ENCODE measurements at regions of chr17 and their contacts with region 1.

Region 1: DNA sequence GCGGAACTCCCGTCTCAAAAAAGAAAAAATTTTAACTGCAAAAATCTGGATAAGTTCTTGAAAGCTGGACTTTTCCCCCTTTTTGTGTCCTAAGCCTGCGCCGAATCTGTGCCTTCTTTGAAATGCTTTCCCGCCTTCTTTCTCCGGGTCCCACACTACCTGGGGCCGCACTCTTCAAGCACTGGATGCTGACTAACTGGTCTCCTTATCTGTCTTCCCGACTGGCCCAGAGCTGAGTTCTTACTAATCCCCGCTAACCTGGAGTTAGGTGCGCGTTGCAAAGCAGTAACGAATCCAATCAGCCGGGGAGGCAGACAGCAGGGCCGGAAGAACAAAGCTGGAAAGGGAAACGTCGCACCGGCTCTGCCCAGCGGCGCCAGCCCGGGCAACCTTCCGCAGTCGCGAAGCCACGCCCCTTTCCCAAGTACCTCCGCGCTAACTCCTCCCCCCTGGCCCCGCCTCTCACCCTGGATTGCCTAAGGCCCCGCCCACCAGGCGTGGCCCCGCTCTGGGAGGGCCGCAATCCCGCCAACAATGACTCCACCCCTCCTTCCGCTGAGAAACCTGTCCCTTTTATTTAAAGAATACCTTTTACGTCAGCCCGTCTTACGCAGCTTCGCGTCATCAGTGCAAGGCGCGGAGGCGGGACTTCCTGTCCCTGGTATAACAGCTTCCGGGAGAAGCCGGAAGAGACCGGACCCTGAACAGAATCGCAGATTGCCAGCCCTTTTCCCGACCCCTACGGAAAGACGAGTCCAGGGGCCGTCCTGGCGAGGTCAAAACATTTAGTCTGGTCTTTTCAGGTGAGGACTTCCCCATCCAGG is at the start of gene TMUB2:
- DNase-seq: peak; percentile 99 to 100 (median 100)
- ATAC-seq: peak; percentile 97
- H3K4me3 ChIP-seq: peak within 1 kb of the TSS; percentile 89 to 94
- H3K4me3 Mint-ChIP-seq: peak within 1 kb of the TSS; percentile 100
- H3K27ac ChIP-seq: peak within 1 kb of the TSS; percentile 99
- H3K27ac Mint-ChIP-seq: peak within 1 kb of the TSS; percentile 100
- H3K4me1 ChIP-seq: peaks cover 30% of the 10 kb centered on the region
- H3K4me1 Mint-ChIP-seq: peaks cover 48% of the 10 kb centered on the region
- H3K27me3 ChIP-seq: no peaks in the 10 kb centered on the region
- H3K27me3 Mint-ChIP-seq: no peaks in the 10 kb centered on the region
- CTCF ChIP-seq: no peak
- total RNA-seq, gene TMUB2: 43.2 to 43.8 TPM

Region 2: GRCh38 chr17:43900183-43900857 is 286.2 kb before region 1 on chr17:
- CTCF ChIA-PET with region 1: no interaction called
- POLR2A ChIA-PET with region 1: no interaction called
- intact Hi-C with region 1: loop called in 1 of 2 experiments (anchors 10 kb)
- DNase-seq: peak; percentile 55 to 84 (median 79)
- ATAC-seq: peak; percentile 99
- H3K4me3 ChIP-seq: peak overlapping the region; percentile 34 to 57
- H3K4me3 Mint-ChIP-seq: peak overlapping the region; percentile 81
- H3K27ac ChIP-seq: no peak overlapping the region
- H3K27ac Mint-ChIP-seq: no peak overlapping the region
- H3K4me1 ChIP-seq: peaks cover 6% of the 10 kb centered on the region
- H3K4me1 Mint-ChIP-seq: peaks cover 9% of the 10 kb centered on the region
- H3K27me3 ChIP-seq: no peaks in the 10 kb centered on the region
- H3K27me3 Mint-ChIP-seq: peaks cover 27% of the 10 kb centered on the region
- CTCF ChIP-seq: no peak

Region 3: GRCh38 chr17:44070455-44071197 is 115.9 kb before region 1 on chr17 and contains the start of gene G6PC3:
- CTCF ChIA-PET with region 1: interaction called, 3 read pairs
- POLR2A ChIA-PET with region 1: no interaction called
- intact Hi-C with region 1: loop called (anchors 2 to 5 kb)
- DNase-seq: peak; percentile 30 to 88 (median 75)
- ATAC-seq: peak; percentile 55
- H3K4me3 ChIP-seq: peak within 1 kb of the TSS; percentile 70 to 84
- H3K4me3 Mint-ChIP-seq: peak within 1 kb of the TSS; percentile 96
- H3K27ac ChIP-seq: peak within 1 kb of the TSS; percentile 62 to 80
- H3K27ac Mint-ChIP-seq: peak within 1 kb of the TSS; percentile 94
- H3K4me1 ChIP-seq: peaks cover 23% of the 10 kb centered on the region
- H3K4me1 Mint-ChIP-seq: peaks cover 34% of the 10 kb centered on the region
- H3K27me3 ChIP-seq: no peaks in the 10 kb centered on the region
- H3K27me3 Mint-ChIP-seq: no peaks in the 10 kb centered on the region
- CTCF ChIP-seq: no peak
- total RNA-seq, gene G6PC3: 4.8 to 5.9 TPM

Region 4: DNA sequence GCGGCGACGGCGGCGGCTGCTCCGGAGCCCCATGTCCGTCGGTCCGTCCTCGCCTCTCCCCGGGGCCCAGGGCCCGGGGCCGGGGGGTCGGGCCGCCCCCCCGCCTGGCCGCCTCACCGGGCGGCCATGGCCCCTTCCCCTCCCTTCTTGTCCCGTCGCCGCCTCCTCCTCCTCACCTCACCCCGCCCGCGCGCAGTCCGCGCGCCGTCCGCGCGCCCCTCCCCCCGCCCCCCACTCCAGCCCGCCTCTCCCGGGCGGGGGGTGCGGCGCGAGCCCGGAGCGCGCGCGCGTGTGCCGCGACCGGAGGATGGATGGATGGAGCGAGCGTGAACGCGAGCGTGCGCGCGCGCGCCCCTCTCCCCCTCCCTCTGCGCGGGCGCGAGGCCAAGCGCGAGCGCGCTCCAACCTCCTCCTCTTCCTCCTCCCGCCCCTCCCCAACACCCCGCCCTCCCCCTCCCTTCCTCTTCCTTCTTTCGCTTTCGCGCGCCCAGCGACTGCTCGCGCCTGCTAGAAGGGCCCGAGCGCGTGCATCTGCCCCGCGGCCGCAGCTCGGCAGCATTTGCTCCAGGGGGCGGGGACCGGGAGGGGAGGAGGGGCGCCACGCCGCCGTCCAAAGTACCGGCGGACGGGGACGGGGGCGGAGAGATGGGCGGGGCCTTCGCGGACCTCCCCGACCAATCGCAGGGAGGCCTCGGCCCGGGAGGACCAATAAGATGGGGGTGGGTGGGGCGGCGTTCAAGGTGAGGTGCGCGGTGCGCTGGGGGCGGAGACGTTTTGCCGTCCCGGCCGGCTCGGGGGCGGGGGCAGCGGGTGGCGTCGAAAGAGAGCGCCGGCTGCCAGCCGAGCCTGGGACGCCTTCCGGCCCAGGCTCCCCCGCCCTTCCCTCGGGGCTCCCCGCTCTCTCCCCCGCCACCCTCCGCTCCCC is 13.3 kb after region 1 on chr17 and contains the start of gene ATXN7L3:
- CTCF ChIA-PET with region 1: interaction called, 26 read pairs
- POLR2A ChIA-PET with region 1: interaction called, 15 read pairs
- intact Hi-C with region 1: loop called (anchors 1 kb)
- DNase-seq: peak; percentile 99 to 100 (median 99)
- ATAC-seq: peak; percentile 84
- H3K4me3 ChIP-seq: peak within 1 kb of the TSS; percentile 84 to 96
- H3K4me3 Mint-ChIP-seq: peak within 1 kb of the TSS; percentile 86
- H3K27ac ChIP-seq: peak within 1 kb of the TSS; percentile 69 to 92
- H3K27ac Mint-ChIP-seq: peak within 1 kb of the TSS; percentile 93
- H3K4me1 ChIP-seq: peaks cover 36% of the 10 kb centered on the region
- H3K4me1 Mint-ChIP-seq: peaks cover 43% of the 10 kb centered on the region
- H3K27me3 ChIP-seq: no peaks in the 10 kb centered on the region
- H3K27me3 Mint-ChIP-seq: no peaks in the 10 kb centered on the region
- CTCF ChIP-seq: no peak
- total RNA-seq, gene ATXN7L3: 85.5 to 85.7 TPM

Region 5: GRCh38 chr17:44324571-44325275 is 138.2 kb after region 1 on chr17 and contains the start of gene SLC25A39:
- CTCF ChIA-PET with region 1: interaction called, 9 read pairs
- POLR2A ChIA-PET with region 1: interaction called, 5 read pairs
- intact Hi-C with region 1: loop called (anchors 1 kb)
- DNase-seq: peak; percentile 90 to 98 (median 96)
- ATAC-seq: peak; percentile 72
- H3K4me3 ChIP-seq: peak within 1 kb of the TSS; percentile 84 to 91
- H3K4me3 Mint-ChIP-seq: peak within 1 kb of the TSS; percentile 88
- H3K27ac ChIP-seq: peak within 1 kb of the TSS; percentile 88 to 93
- H3K27ac Mint-ChIP-seq: peak within 1 kb of the TSS; percentile 96
- H3K4me1 ChIP-seq: peaks cover 14% of the 10 kb centered on the region
- H3K4me1 Mint-ChIP-seq: peaks cover 30% of the 10 kb centered on the region
- H3K27me3 ChIP-seq: no peaks in the 10 kb centered on the region
- H3K27me3 Mint-ChIP-seq: no peaks in the 10 kb centered on the region
- CTCF ChIP-seq: no peak
- total RNA-seq, gene SLC25A39: 73.1 to 77.7 TPM